ENCODE measurements at regions of chr6 and their contacts with region 1.

Region 1: DNA sequence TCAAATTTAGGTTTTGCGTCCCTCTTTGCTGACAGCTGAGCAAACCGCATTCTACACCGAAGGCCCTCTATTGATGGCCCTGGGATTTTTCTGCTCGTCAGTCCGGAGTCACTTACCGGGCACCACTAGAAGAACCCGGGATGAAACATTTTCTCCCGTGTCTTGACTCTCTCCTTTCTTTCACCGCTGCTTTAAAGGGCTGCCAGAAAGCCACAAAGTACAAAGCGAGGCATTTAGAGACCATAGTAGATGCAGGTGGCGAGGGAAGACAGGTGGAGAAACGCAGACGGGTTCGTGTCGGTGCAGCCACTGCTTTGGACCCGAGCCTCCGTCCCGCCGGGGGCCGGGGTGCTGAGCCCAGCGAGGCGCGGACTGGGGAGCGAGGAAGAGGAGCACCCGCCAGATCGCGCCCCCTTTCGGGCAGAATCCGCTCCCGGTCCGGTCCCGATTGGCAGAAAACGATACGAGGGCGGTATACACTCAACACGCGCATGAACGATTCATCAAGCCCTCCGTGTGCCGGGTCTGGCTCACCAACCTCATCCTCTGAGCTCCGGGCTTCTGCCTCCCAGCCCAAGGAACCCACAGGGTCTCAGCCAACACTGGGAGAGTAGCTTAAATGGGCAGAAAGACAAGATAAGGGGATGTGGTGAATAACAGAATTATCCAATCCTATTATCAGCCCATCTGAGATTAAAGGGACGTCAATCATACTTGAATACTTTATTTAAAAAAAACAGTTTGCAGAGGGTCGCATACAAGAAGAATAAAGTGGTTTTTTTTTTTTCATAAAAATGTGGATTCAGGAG is 84.9 kb downstream of the TRIM27 start:
- DNase-seq: peak; percentile 89
- ATAC-seq: peak; percentile 83
- H3K4me3 ChIP-seq: peak overlapping the region; percentile 80
- H3K27ac ChIP-seq: no peak overlapping the region
- H3K4me1 ChIP-seq: peaks cover 6% of the 10 kb centered on the region; the same call in 1 of the 2 replicates
- H3K27me3 ChIP-seq: no peaks in the 10 kb centered on the region
- CTCF ChIP-seq: peak; percentile 79

Region 2: GRCh38 chr6:28683944-28684538 is 154.8 kb before region 1 on chr6:
- CTCF ChIA-PET with region 1: interaction called, 3 read pairs
- POLR2A ChIA-PET with region 1: no interaction called
- intact Hi-C with region 1: loop called (anchors 1 kb)
- DNase-seq: peak; percentile 70
- ATAC-seq: peak; percentile 73
- H3K4me3 ChIP-seq: peak overlapping the region; percentile 72
- H3K27ac ChIP-seq: no peak overlapping the region
- H3K4me1 ChIP-seq: peaks cover 13% of the 10 kb centered on the region; the same call in 1 of the 2 replicates
- H3K27me3 ChIP-seq: 0 out of 2 replicates have a peak, but pooled peaks cover 3% of the 10 kb centered on the region
- CTCF ChIP-seq: peak; percentile 75

Region 3: DNA sequence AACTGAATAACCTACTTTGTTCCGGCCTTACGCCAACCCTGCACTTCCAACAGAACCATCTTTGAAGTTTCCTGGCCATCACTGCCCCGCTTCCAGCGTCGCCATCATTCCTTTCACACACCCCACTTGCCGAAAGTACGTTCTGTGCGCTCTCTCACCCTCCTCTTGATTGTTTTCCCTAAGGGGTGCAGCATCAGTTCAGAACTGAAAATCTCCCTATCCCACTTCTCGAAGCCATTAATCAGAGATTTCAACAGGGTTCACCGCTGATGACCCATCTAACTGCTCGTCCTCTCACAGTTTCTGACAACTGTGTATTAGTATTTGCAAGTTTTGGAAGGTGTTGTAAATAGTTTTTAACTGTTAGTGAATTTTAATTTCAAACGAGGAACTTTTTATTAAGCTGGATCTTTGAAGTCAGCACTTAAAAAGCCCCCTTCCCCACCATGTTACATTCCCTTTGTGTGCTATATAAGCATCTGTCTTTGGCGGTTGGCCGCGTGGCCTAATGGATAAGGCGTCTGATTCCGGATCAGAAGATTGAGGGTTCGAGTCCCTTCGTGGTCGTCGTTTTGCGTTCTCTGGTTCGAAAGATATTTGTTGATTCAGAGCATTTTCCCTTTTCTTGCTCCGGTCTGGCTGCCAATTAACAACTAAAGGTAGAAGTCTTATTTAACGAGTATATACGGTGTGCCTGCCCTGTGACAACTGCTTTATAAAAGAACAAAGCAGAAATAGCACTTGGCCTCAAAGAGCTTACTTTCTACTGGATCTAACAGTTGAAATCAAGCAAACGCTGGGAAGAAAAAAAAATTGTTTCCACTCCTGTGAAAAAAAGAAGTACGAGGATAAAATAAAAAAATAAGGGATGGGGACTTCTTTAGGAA is 42.3 kb after region 1 on chr6:
- CTCF ChIA-PET with region 1: interaction called, 3 read pairs
- POLR2A ChIA-PET with region 1: no interaction called
- intact Hi-C with region 1: loop called (anchors 1 kb)
- DNase-seq: peak; percentile 88
- ATAC-seq: peak; percentile 74
- H3K4me3 ChIP-seq: peak overlapping the region; percentile 81
- H3K27ac ChIP-seq: no peak overlapping the region
- H3K4me1 ChIP-seq: no peaks in the 10 kb centered on the region; the same call in 1 of the 2 replicates
- H3K27me3 ChIP-seq: no peaks in the 10 kb centered on the region
- CTCF ChIP-seq: no peak

Region 4: GRCh38 chr6:28923318-28924102 is 84.7 kb after region 1 on chr6 and contains the start of gene TRIM27:
- CTCF ChIA-PET with region 1: interaction called, 7 read pairs
- POLR2A ChIA-PET with region 1: no interaction called
- intact Hi-C with region 1: loop called (anchors 1 kb)
- DNase-seq: peak; percentile 95
- ATAC-seq: peak; percentile 72
- H3K4me3 ChIP-seq: peak within 1 kb of the TSS; percentile 86
- H3K27ac ChIP-seq: peak within 1 kb of the TSS; percentile 82
- H3K4me1 ChIP-seq: peaks cover 23% of the 10 kb centered on the region
- H3K27me3 ChIP-seq: no peaks in the 10 kb centered on the region
- CTCF ChIP-seq: no peak
- total RNA-seq, gene TRIM27: 85.8 and 92.5 TPM in 2 replicates

Region 5: DNA sequence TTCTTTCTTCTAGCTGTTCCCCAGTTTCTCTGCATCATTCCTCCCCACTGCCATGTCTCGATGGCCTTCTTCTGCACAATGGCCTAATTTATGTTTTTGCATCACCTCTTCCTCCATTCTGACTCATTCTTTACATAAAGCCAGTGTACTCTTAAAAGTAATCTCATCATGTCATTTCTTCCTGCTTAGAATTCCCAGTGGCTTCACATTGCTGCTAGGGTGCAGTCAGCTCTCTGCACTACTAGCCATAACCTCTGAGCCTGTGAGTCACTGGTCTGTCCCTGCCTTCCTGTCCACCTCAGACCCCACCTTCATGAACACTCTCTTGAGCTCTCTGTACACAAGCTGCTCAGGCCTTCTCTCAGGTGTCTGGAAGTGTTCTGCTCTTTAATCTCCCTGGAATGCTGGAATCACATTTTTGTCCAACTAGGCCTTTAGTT is 109.0 kb after region 1 on chr6:
- CTCF ChIA-PET with region 1: interaction called, 6 read pairs
- POLR2A ChIA-PET with region 1: interaction called, 12 read pairs
- intact Hi-C with region 1: no loop called
- DNase-seq: peak; percentile 94
- ATAC-seq: peak; percentile 90
- H3K4me3 ChIP-seq: no peak overlapping the region
- H3K27ac ChIP-seq: peak overlapping the region; percentile 93
- H3K4me1 ChIP-seq: peaks cover 27% of the 10 kb centered on the region
- H3K27me3 ChIP-seq: no peaks in the 10 kb centered on the region
- CTCF ChIP-seq: no peak

Region 6: GRCh38 chr6:28996844-28997510 is 158.1 kb after region 1 on chr6:
- CTCF ChIA-PET with region 1: interaction called, 12 read pairs
- POLR2A ChIA-PET with region 1: interaction called, 16 read pairs
- intact Hi-C with region 1: no loop called
- DNase-seq: no peak
- ATAC-seq: no peak
- H3K4me3 ChIP-seq: no peak overlapping the region
- H3K27ac ChIP-seq: no peak overlapping the region
- H3K4me1 ChIP-seq: no peaks in the 10 kb centered on the region
- H3K27me3 ChIP-seq: no peaks in the 10 kb centered on the region
- CTCF ChIP-seq: no peak